Activated T-helper 2 cell treated with anti-CD3 and anti-CD28 coated beads, Interferon-gamma antibody, Interleukin-2, Interleukin-4, amounts not matched to agents 10 μg/mL and 5 μg/mL and 100 μg/mL, durations not matched to agents 14 hours and 24 hours and 36 hours (primary cell): ENCODE measurements at regions of chr19 and their contacts with region 1.

Region 1: DNA sequence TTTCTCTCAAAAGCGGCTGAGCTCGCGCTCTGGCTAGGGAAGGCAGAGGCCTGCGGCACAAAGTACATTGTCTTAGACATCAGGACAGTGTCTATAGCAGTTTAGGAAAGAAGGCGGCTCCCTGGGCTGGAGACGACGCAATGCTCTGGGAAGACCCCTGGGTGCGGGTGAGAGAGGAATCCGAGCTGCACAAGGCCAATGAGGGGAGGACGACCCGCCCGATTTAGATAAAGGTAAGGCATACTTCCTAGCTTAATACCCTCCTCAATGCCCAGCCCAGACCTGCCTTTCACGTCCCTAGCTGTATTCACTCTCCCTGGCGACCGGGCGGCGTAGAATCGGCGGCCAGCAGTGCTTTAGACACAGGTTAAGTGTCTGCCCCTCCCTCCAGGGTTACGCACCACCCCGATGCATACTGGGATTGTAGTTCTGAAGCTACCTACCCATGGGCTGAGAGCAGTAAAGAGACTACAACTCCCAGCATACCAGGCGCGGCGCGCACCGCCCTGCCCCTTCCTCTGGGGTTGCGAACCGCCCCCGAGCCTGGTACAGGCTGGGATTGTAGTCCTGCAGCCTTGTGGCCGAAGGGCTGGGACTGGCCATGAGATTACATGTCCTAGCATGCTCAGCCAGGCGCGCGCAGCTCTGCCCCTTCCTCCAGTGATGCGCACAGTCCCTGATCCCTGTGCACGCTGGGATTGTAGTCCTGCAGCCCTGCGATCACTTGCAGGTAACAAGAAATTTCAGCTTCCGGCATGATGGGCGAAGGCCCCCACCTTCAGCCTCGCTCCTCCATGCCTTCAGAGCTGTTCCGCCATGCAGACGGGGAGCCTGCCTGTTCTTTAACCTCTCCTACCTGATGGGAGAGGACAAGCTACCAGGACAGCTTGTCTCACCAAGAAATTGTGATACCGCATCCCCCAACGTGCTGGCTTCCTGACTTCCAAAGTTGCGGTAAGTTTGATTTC is 43.4 kb upstream of the ZNF14 start:
- DNase-seq: peak; percentile 89
- H3K4me3 Mint-ChIP-seq: peak overlapping the region; percentile 96
- H3K27ac Mint-ChIP-seq: peak overlapping the region; percentile 86
- H3K4me1 Mint-ChIP-seq: peaks cover 27% of the 10 kb centered on the region
- H3K27me3 Mint-ChIP-seq: no peaks in the 10 kb centered on the region

Region 2: DNA sequence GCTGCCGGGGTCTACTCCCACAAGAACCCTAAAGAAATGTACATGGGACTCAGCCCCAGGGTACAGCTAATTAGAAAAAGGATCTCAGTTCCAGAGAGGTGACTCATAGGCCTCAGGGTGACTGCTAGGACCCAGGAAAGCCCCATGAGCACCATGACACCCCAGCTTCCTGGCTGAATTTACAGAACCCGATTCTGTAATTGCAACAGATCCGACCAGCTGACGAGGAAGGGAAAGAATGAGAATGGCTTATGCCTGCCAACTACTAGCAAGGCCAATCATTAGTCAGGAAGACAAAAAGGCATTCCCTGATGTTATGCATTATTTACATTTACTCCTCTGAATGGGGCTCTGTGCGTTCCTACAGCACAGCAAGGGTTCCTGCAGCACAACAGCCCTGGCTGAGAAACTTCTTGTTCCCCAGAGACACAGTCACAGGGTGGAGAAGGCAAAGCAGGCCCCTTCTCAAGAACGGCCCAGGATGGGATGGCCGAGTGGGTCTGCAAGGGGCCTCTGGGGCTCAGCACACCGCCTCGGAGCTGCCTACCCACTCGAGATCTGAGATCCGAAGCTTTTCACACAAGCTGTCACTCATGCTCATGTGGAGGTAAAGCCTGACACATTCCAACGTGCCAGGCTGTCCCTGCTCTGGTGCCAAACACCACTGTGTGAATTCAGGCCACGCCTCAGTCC is 185.0 kb before region 1 on chr19:
- intact Hi-C with region 1: loop called (anchors 2 kb)
- DNase-seq: peak; percentile 58
- H3K4me3 Mint-ChIP-seq: peak overlapping the region; percentile 51
- H3K27ac Mint-ChIP-seq: peak overlapping the region; percentile 93
- H3K4me1 Mint-ChIP-seq: peaks cover 57% of the 10 kb centered on the region
- H3K27me3 Mint-ChIP-seq: no peaks in the 10 kb centered on the region

Region 3: DNA sequence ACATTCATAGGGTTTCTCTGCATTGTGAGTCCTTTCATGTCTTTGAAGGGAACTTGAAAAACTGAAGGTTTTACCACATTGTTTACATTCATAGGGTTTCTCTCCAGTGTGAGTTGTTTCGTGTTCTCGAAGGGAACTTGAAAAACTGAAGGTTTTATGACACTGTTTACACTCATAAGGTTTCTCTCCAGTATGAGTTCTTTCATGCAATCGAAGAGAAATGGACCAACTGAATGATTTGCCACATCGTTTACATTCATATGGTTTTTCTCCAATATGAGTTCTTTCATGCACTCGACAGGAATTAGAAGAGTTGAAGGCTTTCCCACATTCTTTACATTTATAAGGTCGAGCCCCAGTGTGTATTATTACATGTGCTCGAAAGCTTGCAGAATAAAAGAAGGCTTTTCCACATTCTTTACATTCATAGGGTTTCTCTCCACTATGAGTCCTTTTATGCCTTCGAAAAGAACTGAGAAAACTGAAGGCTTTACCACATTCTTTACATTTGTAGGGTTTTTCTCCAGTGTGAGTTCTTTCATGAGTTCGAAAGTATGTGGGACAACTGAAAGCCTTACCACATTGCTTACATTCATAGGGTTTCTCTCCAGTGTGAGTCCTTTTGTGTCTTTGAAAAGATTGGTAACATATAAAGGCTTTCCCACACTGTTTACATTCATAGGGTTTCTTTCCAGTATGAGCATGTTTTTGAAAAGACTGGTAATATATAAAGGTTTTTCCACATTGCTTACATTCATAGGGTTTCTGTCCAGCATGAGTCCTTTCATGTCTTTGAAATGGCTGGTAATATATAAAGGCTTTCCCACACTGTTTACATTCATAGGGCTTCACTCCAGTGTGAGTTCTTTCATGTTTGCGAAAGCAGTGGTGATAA is 64.1 kb before region 1 on chr19:
- intact Hi-C with region 1: no loop called
- DNase-seq: no peak
- H3K4me3 Mint-ChIP-seq: no peak overlapping the region
- H3K27ac Mint-ChIP-seq: no peak overlapping the region
- H3K4me1 Mint-ChIP-seq: no peaks in the 10 kb centered on the region
- H3K27me3 Mint-ChIP-seq: no peaks in the 10 kb centered on the region

Region 4: DNA sequence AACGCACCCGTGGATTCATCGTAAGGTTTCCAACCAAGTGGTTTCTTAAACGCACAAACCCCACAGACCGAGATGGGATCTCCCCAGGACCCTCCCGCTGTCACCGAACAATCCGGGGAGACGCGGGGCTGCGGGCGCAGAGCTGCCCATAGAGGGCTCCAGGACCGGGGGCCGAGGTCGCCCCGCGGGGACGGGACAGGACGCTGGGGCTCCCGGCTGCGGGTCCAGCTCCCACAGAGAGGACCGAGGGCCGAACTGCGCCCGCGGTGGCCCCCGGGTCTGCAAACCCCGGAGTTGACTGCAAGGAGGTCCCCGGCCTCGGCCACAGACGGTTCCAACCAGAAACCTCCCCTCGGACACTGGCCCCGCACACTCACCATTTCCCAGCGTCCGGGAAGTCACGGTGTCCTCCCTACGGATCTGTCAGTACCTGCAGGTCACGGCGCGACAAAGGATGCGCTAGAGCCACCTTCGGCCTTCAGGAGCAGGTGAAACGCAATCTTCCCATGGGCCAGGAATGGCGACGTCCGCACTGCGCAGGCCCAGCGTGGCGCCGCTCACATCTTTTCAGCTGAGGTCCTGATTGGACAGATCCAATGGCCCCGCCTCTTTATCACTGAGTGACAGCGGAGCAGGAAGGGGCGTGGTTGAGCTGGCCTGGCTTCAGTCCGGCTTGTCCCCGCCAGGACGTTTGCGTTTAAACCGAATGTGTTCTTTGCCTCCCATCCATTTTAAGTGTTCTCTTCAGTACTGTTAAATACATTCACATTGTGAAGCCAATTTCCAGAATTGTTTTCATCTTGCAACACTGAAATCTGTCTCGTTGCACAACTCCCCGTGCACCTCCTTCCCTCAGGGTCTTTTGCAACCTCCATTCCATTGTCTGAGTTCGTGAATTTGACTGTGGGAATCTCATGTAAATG is 43.5 kb before region 1 on chr19 and contains the start of gene ZNF14:
- intact Hi-C with region 1: loop called (anchors 2 kb)
- DNase-seq: peak; percentile 84
- H3K4me3 Mint-ChIP-seq: peak within 1 kb of the TSS; percentile 97
- H3K27ac Mint-ChIP-seq: peak within 1 kb of the TSS; percentile 91
- H3K4me1 Mint-ChIP-seq: peaks cover 11% of the 10 kb centered on the region
- H3K27me3 Mint-ChIP-seq: no peaks in the 10 kb centered on the region
- total RNA-seq, gene ZNF14: 4.2 and 4.6 TPM in 2 replicates

Region 5: DNA sequence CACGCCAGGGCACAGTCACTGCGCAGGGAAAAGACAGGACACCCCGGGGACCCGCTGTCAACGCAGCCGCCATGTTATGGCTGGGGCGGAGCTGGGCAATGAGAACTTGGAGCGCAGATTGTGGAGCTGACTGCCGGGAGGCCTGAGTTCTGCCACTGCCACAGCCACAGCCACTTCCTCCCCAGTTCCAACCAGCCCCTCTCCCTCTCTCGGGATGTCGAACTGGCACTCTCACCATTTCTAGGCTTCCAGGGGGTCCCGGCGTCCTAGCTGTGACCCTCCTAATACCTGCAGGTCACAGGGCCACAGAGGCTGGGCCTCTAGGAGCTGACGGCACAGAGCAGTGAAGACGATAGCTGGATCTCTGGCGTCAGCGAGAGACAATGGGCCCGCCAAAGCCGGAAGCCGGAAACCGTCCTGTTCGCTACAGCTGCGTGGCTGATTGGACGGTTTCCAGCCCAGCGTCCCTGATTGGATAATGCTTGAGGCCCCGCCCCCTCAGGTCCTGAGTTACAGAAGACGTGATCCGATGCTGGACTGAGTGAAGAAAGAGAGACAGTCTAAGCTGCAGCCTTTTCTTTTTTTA is 45.1 kb after region 1 on chr19 and contains the start of gene ZNF506:
- intact Hi-C with region 1: loop called (anchors 1 kb)
- DNase-seq: peak; percentile 90
- H3K4me3 Mint-ChIP-seq: peak within 1 kb of the TSS; percentile 96
- H3K27ac Mint-ChIP-seq: peak within 1 kb of the TSS; percentile 98
- H3K4me1 Mint-ChIP-seq: peaks cover 13% of the 10 kb centered on the region
- H3K27me3 Mint-ChIP-seq: no peaks in the 10 kb centered on the region
- total RNA-seq, gene ZNF506: 13.2 and 15.1 TPM in 2 replicates

Region 6: GRCh38 chr19:19865739-19866481 is 89.6 kb after region 1 on chr19 and contains the start of gene ZNF253:
- intact Hi-C with region 1: loop called (anchors 1 kb)
- DNase-seq: peak; percentile 92
- H3K4me3 Mint-ChIP-seq: peak within 1 kb of the TSS; percentile 93
- H3K27ac Mint-ChIP-seq: peak within 1 kb of the TSS; percentile 97
- H3K4me1 Mint-ChIP-seq: peaks cover 7% of the 10 kb centered on the region
- H3K27me3 Mint-ChIP-seq: no peaks in the 10 kb centered on the region
- total RNA-seq, gene ZNF253: 8.6 and 9.9 TPM in 2 replicates

Region 7: DNA sequence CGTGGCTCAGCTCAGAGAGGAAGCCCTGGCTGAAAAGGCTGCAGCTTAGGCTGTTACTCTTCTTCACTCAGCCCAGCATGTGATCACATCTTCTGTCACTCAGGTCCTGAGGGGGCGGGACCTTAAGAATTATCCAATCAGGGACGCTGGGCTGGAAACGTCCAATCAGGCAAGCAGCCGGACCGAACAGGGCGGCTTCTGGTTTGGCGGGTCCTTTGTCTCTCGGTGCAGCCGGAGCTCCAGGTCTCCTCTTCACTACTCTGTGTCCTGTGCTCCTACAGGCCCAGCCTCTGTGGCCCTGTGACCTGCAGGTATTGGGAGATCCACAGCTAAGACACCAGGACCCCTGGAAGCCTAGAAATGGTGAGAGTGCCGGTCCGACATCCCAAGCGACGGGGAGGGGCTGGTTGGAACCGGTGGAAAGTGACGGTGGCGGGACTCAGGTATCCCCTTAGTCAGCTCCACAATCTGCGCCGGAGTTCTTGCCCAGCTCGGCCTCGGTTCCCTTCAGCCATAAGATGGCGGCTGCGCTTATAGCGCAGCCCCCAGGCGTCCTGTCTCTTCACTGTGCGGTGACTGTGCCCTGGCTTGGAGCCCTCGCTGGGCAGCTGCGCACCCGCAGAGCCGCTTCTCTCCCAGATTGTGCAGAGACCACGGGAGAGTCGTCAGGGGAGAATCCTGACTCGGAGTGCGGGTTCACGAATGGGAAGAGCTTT is 124.6 kb after region 1 on chr19 and contains the start of gene ZNF93:
- intact Hi-C with region 1: loop called (anchors 1 kb)
- DNase-seq: peak; percentile 84
- H3K4me3 Mint-ChIP-seq: peak within 1 kb of the TSS; percentile 93
- H3K27ac Mint-ChIP-seq: peak within 1 kb of the TSS; percentile 92
- H3K4me1 Mint-ChIP-seq: peaks cover 6% of the 10 kb centered on the region
- H3K27me3 Mint-ChIP-seq: no peaks in the 10 kb centered on the region
- total RNA-seq, gene ZNF93: 7.1 and 7.6 TPM in 2 replicates